Naive thymus-derived CD4-positive, alpha-beta T cell (primary cell): ENCODE measurements at regions of chr5 and their contacts with region 1.

Region 1: GRCh38 chr5:131382407-131383395 is 118.8 kb downstream of the CDC42SE2 start:
- DNase-seq: peak in 8 of 9 donors; percentile 43 to 88 (median 82)
- ATAC-seq: peak; percentile 81
- H3K4me3 ChIP-seq: no peak overlapping the region
- H3K4me3 Mint-ChIP-seq: peak overlapping the region; percentile 40 to 86 (median 72)
- H3K27ac ChIP-seq: peak overlapping the region; percentile 97
- H3K27ac Mint-ChIP-seq: peak overlapping the region; percentile 94 to 99 (median 98)
- H3K4me1 ChIP-seq: peaks cover 74 to 76% of the 10 kb centered on the region in 2 donors
- H3K4me1 Mint-ChIP-seq: peaks cover 41 to 100% (median 92%) of the 10 kb centered on the region in 7 donors
- H3K27me3 ChIP-seq: no peaks in the 10 kb centered on the region
- H3K27me3 Mint-ChIP-seq: no peaks in the 10 kb centered on the region

Region 2: GRCh38 chr5:131165119-131165727 is 217.5 kb before region 1 on chr5 and contains the start of gene HINT1:
- CTCF ChIA-PET with region 1: interaction called, 7 read pairs
- POLR2A ChIA-PET with region 1: interaction called, 6 read pairs
- intact Hi-C with region 1: loop called (anchors 1 kb)
- DNase-seq: peak; percentile 86 to 98 (median 93)
- ATAC-seq: peak; percentile 89
- H3K4me3 ChIP-seq: peak within 1 kb of the TSS; percentile 97
- H3K4me3 Mint-ChIP-seq: peak within 1 kb of the TSS; percentile 93 to 98 (median 97)
- H3K27ac ChIP-seq: peak within 1 kb of the TSS; percentile 91
- H3K27ac Mint-ChIP-seq: peak within 1 kb of the TSS; percentile 95 to 99 (median 98)
- H3K4me1 ChIP-seq: peaks cover 15 to 23% of the 10 kb centered on the region in 2 donors
- H3K4me1 Mint-ChIP-seq: peaks cover 28 to 74% (median 61%) of the 10 kb centered on the region in 7 donors
- H3K27me3 ChIP-seq: no peaks in the 10 kb centered on the region
- H3K27me3 Mint-ChIP-seq: no peaks in the 10 kb centered on the region
- total RNA-seq, gene HINT1: 172 to 319 (median 233) TPM

Region 3: DNA sequence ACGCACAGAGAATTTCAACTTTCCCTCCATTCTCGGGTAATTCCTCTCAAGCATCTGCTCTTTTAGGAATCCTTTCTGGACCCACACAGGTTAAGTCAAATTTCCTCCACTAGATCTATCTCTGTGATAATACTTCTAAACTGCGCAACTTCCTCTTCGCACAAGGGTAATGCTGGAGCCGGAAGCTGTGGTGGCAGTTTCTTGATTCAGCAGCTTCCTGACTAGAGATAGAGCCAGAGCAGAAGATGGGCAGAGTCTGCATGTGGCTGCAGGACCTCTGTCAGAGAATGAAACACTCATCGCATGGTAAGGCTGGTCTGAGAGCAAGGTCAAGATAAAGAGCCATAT is 129.9 kb before region 1 on chr5:
- CTCF ChIA-PET with region 1: interaction called, 8 read pairs
- POLR2A ChIA-PET with region 1: interaction called, 23 read pairs
- intact Hi-C with region 1: loop called in 1 of 2 experiments (anchors 1 kb)
- DNase-seq: peak; percentile 41 to 90 (median 87)
- ATAC-seq: peak; percentile 93
- H3K4me3 ChIP-seq: peak overlapping the region; percentile 72
- H3K4me3 Mint-ChIP-seq: peak overlapping the region; percentile 80 to 97 (median 96)
- H3K27ac ChIP-seq: peak overlapping the region; percentile 78
- H3K27ac Mint-ChIP-seq: peak overlapping the region; percentile 91 to 97 (median 95)
- H3K4me1 ChIP-seq: peaks cover 51 to 54% of the 10 kb centered on the region in 2 donors
- H3K4me1 Mint-ChIP-seq: peaks cover 62 to 89% (median 67%) of the 10 kb centered on the region in 7 donors
- H3K27me3 ChIP-seq: no peaks in the 10 kb centered on the region
- H3K27me3 Mint-ChIP-seq: no peaks in the 10 kb centered on the region

Region 4: GRCh38 chr5:131281133-131281867 is 101.4 kb before region 1 on chr5:
- CTCF ChIA-PET with region 1: interaction called, 9 read pairs
- POLR2A ChIA-PET with region 1: interaction called, 12 read pairs
- intact Hi-C with region 1: loop called (anchors 1 kb)
- DNase-seq: peak in 7 of 9 donors; percentile 74 to 94 (median 89)
- ATAC-seq: peak; percentile 91
- H3K4me3 ChIP-seq: peak overlapping the region; percentile 50
- H3K4me3 Mint-ChIP-seq: peak overlapping the region; percentile 72 to 87 (median 80)
- H3K27ac ChIP-seq: peak overlapping the region; percentile 80
- H3K27ac Mint-ChIP-seq: peak overlapping the region; percentile 82 to 98 (median 94)
- H3K4me1 ChIP-seq: peaks cover 65 to 88% of the 10 kb centered on the region in 2 donors
- H3K4me1 Mint-ChIP-seq: peaks cover 42 to 90% (median 80%) of the 10 kb centered on the region in 7 donors
- H3K27me3 ChIP-seq: no peaks in the 10 kb centered on the region
- H3K27me3 Mint-ChIP-seq: peaks cover 0 to 3% (median 0%) of the 10 kb centered on the region in 5 donors

Region 5: DNA sequence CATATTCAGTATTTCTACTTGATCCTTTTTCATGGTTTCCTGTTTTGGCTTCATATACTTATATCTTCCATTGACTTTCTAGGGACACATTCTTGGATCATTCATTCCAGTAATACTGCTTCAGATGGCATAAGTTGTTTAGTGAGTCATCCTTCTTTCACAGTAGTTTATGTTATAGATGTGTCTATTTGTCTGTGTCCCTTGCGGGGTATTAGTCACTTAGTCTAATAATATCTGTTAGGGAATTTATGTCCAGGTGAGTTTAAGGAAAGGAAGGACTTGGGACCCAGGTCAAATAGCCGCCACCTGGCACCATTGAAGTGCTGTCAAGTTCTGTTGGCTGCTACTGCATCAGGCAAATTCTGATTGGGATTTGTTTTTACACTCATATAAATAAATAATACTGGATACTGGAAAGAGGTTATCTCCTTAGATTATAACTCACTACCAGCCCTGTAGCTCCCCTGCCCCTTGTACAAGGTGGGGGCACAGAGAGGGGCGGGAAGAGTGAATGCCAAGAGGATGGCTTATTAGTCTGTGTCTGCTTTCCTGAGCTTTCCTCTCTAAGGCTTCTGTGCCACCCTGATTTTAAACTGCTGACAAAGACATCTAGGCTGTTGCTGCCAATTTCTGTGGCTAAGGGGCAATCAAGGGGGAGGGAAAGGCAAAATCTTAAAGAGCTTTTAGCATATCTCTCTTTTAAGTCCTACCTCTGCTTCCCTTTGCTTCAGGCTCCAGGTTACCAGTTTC is 54.0 kb before region 1 on chr5:
- CTCF ChIA-PET with region 1: interaction called, 3 read pairs
- POLR2A ChIA-PET with region 1: interaction called, 3 read pairs
- intact Hi-C with region 1: loop called (anchors 1 to 2 kb)
- DNase-seq: peak in 1 of 9 donors; percentile 11
- ATAC-seq: peak; percentile 18
- H3K4me3 ChIP-seq: no peak overlapping the region
- H3K4me3 Mint-ChIP-seq: peak overlapping the region in 9 of 10 donors; percentile 1 to 76 (median 42)
- H3K27ac ChIP-seq: peak overlapping the region; percentile 9
- H3K27ac Mint-ChIP-seq: peak overlapping the region; percentile 44 to 85 (median 73)
- H3K4me1 ChIP-seq: peaks cover 38 to 49% of the 10 kb centered on the region in 2 donors
- H3K4me1 Mint-ChIP-seq: peaks cover 48 to 92% (median 66%) of the 10 kb centered on the region in 7 donors
- H3K27me3 ChIP-seq: no peaks in the 10 kb centered on the region
- H3K27me3 Mint-ChIP-seq: no peaks in the 10 kb centered on the region

Region 6: DNA sequence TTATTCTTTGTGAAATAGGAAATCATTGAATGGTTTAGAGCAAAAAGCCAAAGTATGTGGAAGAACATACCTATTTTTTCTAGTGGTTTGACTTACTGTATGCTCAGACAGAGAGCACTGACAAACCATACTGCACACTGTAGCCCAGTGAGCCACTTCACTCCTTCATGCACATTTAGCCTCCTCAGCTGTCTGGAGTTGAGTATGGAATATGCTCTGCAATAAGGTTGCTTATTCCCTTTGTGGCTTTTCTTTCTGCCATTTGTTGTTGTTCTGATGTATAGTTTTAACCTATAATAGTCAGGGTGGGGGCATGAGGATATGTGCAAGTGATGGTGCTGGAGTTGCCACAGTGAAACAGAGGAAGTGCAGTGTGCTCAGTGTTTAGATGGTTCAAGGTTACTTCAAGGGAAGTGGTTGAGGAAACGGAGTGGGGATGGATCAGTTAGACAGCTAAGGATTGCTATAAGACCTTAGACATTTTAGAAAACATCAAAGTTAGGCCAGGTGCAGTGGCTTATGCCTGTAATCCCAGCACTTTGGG is 18.1 kb before region 1 on chr5:
- CTCF ChIA-PET with region 1: interaction called, 8 read pairs
- POLR2A ChIA-PET with region 1: interaction called, 18 read pairs
- intact Hi-C with region 1: loop called (anchors 1 kb)
- DNase-seq: peak in 6 of 9 donors; percentile 45 to 66 (median 57)
- ATAC-seq: peak; percentile 70
- H3K4me3 ChIP-seq: no peak overlapping the region
- H3K4me3 Mint-ChIP-seq: peak overlapping the region; percentile 34 to 70 (median 60)
- H3K27ac ChIP-seq: peak overlapping the region; percentile 61
- H3K27ac Mint-ChIP-seq: peak overlapping the region; percentile 78 to 97 (median 85)
- H3K4me1 ChIP-seq: peaks cover 34 to 40% of the 10 kb centered on the region in 2 donors
- H3K4me1 Mint-ChIP-seq: peaks cover 41 to 91% (median 79%) of the 10 kb centered on the region in 7 donors
- H3K27me3 ChIP-seq: no peaks in the 10 kb centered on the region
- H3K27me3 Mint-ChIP-seq: no peaks in the 10 kb centered on the region

Region 7: GRCh38 chr5:132103332-132103951 is 720.7 kb after region 1 on chr5:
- CTCF ChIA-PET with region 1: no interaction called
- POLR2A ChIA-PET with region 1: no interaction called
- intact Hi-C with region 1: loop called in 1 of 2 experiments (anchors 1 kb)
- DNase-seq: peak in 8 of 9 donors; percentile 49 to 82 (median 72)
- ATAC-seq: peak; percentile 92
- H3K4me3 ChIP-seq: peak overlapping the region; percentile 0
- H3K4me3 Mint-ChIP-seq: peak overlapping the region in 9 of 10 donors; percentile 16 to 74 (median 56)
- H3K27ac ChIP-seq: no peak overlapping the region
- H3K27ac Mint-ChIP-seq: peak overlapping the region in 8 of 9 donors; percentile 14 to 86 (median 64)
- H3K4me1 ChIP-seq: peaks cover 40 to 72% of the 10 kb centered on the region in 2 donors
- H3K4me1 Mint-ChIP-seq: peaks cover 42 to 86% (median 51%) of the 10 kb centered on the region in 7 donors
- H3K27me3 ChIP-seq: no peaks in the 10 kb centered on the region
- H3K27me3 Mint-ChIP-seq: no peaks in the 10 kb centered on the region